ENCODE measurements at regions of chr7 and their contacts with region 1.

Region 1: DNA sequence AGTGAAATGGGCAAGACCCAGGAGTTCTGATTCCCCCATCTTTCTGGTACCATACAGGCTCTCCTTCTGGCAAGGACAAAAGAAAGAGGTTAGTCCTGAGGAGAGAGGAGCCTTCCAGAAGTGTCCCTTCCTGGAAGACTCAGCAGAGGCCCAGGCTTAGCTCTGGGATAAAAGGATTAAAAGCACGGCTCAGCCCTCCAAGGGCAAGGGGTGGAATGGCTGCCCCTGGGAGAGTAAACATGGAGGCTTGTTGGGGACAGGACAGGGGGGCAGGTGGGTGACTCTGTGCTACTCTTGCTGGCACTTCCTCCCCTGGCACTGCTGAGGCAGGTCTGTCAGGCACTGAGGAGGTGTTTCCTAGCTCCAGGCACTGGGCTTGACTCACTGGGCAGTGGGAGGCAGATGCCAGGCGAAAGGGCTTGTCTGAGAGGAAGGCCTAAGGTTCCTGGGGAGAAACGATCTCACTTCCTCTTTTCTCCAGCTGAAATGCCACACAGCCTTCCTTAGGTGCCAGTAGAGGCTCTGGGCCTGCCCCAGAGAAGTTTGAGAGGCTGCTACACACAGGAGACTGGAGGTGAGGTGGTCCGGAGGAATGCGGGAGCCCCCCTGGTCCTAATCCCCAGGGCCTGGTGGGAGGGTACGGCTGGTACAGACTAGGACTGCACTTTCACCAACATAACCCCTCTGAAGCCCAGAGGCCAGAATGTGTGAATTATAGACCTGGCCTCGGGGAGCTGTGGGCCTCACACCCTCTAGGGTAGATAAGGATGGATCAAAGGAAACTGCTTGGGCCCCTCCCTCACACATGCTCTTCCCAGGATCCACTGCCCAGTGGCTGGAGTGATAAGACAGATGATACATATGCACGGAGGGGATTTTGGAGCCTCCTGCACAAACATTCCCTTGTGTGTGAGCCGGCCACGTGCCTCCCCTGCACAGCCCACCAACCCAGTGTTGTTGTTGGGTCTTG is 63.2 kb upstream of the PODXL start:
- DNase-seq: no peak
- ATAC-seq: no peak

Region 2: GRCh38 chr7:131581241-131582051 is 38.2 kb before region 1 on chr7:
- intact Hi-C with region 1: loop called (anchors 5 kb)
- DNase-seq: peak; percentile 86
- ATAC-seq: peak; percentile 90